ENCODE measurements at regions of chr14 and their contacts with region 1.

Region 1: DNA sequence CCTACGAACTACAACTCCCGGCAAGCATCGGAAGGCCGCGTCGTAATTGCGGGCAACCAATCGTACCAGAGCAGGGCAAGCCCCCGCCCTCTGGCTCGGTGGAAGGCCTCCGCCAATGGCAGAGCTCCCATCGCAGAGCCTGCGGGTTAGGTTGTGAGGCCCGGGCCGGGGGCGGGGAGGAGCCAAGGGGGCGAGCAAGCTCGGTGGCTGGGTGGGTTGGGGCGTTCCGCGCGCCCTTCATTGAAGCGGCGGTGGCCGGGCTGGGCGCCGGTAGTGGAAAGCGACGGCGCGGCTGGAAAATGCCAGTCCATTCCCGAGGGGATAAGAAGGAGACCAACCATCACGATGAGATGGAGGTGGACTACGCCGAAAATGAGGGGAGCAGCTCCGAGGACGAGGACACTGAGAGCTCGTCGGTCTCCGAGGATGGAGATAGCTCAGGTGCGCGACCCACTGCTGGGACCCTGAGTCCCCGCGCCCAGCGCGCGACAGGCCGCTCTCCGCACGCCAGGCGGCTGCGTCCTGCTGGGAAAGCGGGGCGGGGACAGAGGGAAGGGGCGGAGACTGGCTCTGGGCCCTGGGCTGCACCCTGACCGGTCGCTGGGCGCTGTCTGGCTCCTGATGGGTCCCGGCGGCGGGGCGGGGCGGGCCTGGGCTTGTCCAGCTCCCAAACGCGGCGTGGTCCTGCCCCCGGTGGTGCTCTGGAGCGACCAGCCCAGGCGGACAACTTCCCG is at the start of gene BRMS1L:
- DNase-seq: peak; percentile 98
- H3K4me3 ChIP-seq: peak within 1 kb of the TSS; percentile 98
- H3K27ac ChIP-seq: peak within 1 kb of the TSS; percentile 93
- H3K27me3 ChIP-seq: peaks cover 2% of the 10 kb centered on the region
- CTCF ChIP-seq: no peak; the same call in 1 of the 2 replicates
- polyA plus RNA-seq, gene BRMS1L: 5.2 and 8.7 TPM in 2 replicates

Region 2: GRCh38 chr14:35776823-35777222 is 49.6 kb before region 1 on chr14:
- CTCF ChIA-PET with region 1: no interaction called
- POLR2A ChIA-PET with region 1: no interaction called
- DNase-seq: no peak
- H3K4me3 ChIP-seq: no peak overlapping the region
- H3K27ac ChIP-seq: no peak overlapping the region
- H3K27me3 ChIP-seq: no peaks in the 10 kb centered on the region
- CTCF ChIP-seq: no peak

Region 3: DNA sequence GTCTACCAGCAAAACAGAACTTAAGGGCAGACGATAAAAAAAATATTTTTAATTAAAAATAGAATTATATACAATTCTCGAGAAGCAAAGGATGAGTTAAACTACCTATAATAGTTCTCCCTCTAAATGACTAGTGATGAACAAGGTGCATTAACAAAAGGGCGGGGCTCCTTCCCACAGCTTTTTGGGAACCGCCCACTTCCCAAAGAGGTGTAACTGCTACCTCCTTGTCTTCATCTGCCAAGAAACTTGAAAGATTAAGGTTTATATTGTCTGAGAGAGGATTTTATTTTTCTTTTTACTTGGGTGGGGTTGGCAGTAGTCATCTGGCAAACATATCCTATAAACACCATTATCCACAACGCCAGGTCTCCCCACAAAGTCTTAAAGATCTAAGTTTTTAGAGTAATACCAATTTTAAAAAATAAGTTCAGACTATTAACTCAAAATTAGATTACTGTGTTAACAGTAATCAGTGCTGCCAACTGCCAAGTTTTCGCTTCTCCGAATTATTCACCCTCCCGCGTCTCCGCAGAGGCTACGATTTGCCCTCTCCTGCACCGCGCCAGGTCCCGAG is 18.2 kb before region 1 on chr14:
- CTCF ChIA-PET with region 1: interaction called, 23 read pairs
- POLR2A ChIA-PET with region 1: interaction called, 15 read pairs
- DNase-seq: no peak
- H3K4me3 ChIP-seq: peak overlapping the region; percentile 79
- H3K27ac ChIP-seq: peak overlapping the region; percentile 82
- H3K27me3 ChIP-seq: no peaks in the 10 kb centered on the region
- CTCF ChIP-seq: no peak

Region 4: GRCh38 chr14:35814371-35815005 is 11.9 kb before region 1 on chr14:
- CTCF ChIA-PET with region 1: interaction called, 17 read pairs
- POLR2A ChIA-PET with region 1: interaction called, 15 read pairs
- DNase-seq: no peak
- H3K4me3 ChIP-seq: no peak overlapping the region
- H3K27ac ChIP-seq: no peak overlapping the region
- H3K27me3 ChIP-seq: peaks cover 4% of the 10 kb centered on the region
- CTCF ChIP-seq: peak; percentile 83

Region 5: GRCh38 chr14:35963209-35963608 is 136.8 kb after region 1 on chr14:
- CTCF ChIA-PET with region 1: no interaction called
- POLR2A ChIA-PET with region 1: no interaction called
- DNase-seq: no peak
- H3K4me3 ChIP-seq: no peak overlapping the region
- H3K27ac ChIP-seq: no peak overlapping the region
- H3K27me3 ChIP-seq: no peaks in the 10 kb centered on the region
- CTCF ChIP-seq: no peak

Region 6: GRCh38 chr14:36254020-36254624 is 427.7 kb after region 1 on chr14:
- CTCF ChIA-PET with region 1: interaction called, 10 read pairs
- POLR2A ChIA-PET with region 1: no interaction called
- DNase-seq: no peak
- H3K4me3 ChIP-seq: no peak overlapping the region
- H3K27ac ChIP-seq: no peak overlapping the region
- H3K27me3 ChIP-seq: no peaks in the 10 kb centered on the region
- CTCF ChIP-seq: peak; percentile 51

Measured in AG04450 (cell line).